Heart left ventricle (tissue), 16 donors: ENCODE measurements at regions of chr15 and their contacts with region 1.

Region 1: GRCh38 chr15:68492855-68493254 is 60.9 kb upstream of the ITGA11 start:
- DNase-seq: peak in 3 of 5 donors; percentile 20 to 83 (median 21)
- ATAC-seq: peak; percentile 23 to 86 (median 80)
- H3K4me3 ChIP-seq: no peak overlapping the region
- H3K27ac ChIP-seq: peak overlapping the region in 4 of 12 donors; percentile 8 to 41 (median 20)
- H3K4me1 ChIP-seq: peaks cover 0 to 20% (median 4%) of the 10 kb centered on the region in 12 donors
- H3K27me3 ChIP-seq: peaks cover 0 to 4% (median 0%) of the 10 kb centered on the region in 9 donors
- CTCF ChIP-seq: no peak
- POLR2A ChIP-seq: no peak

Region 2: GRCh38 chr15:68292967-68293366 is 199.9 kb before region 1 on chr15:
- intact Hi-C with region 1: no loop called
- DNase-seq: no peak
- ATAC-seq: no peak
- H3K4me3 ChIP-seq: no peak overlapping the region
- H3K27ac ChIP-seq: peak overlapping the region in 1 of 12 donors; percentile 38
- H3K4me1 ChIP-seq: peaks cover 5 to 82% (median 52%) of the 10 kb centered on the region in 12 donors
- H3K27me3 ChIP-seq: no peaks in the 10 kb centered on the region
- CTCF ChIP-seq: no peak
- POLR2A ChIP-seq: no peak

Region 3: GRCh38 chr15:68304589-68305337 is 188.1 kb before region 1 on chr15:
- intact Hi-C with region 1: no loop called
- DNase-seq: peak in 1 of 5 donors; percentile 14
- ATAC-seq: no peak
- H3K4me3 ChIP-seq: no peak overlapping the region
- H3K27ac ChIP-seq: no peak overlapping the region
- H3K4me1 ChIP-seq: peaks cover 0 to 25% (median 7%) of the 10 kb centered on the region in 12 donors
- H3K27me3 ChIP-seq: no peaks in the 10 kb centered on the region
- CTCF ChIP-seq: no peak
- POLR2A ChIP-seq: no peak

Region 4: GRCh38 chr15:68450192-68450591 is 42.7 kb before region 1 on chr15:
- intact Hi-C with region 1: loop called in 1 of 10 experiments (anchors 5 kb)
- DNase-seq: peak in 3 of 5 donors; percentile 22 to 70 (median 49)
- ATAC-seq: peak; percentile 81 to 93 (median 90)
- H3K4me3 ChIP-seq: no peak overlapping the region
- H3K27ac ChIP-seq: no peak overlapping the region
- H3K4me1 ChIP-seq: peaks cover 0 to 16% (median 3%) of the 10 kb centered on the region in 12 donors
- H3K27me3 ChIP-seq: peaks cover 0 to 9% (median 0%) of the 10 kb centered on the region in 9 donors
- CTCF ChIP-seq: no peak
- POLR2A ChIP-seq: no peak